OCI-LY7 (cell line): ENCODE measurements at regions of chr17 and their contacts with region 1.

Region 1: DNA sequence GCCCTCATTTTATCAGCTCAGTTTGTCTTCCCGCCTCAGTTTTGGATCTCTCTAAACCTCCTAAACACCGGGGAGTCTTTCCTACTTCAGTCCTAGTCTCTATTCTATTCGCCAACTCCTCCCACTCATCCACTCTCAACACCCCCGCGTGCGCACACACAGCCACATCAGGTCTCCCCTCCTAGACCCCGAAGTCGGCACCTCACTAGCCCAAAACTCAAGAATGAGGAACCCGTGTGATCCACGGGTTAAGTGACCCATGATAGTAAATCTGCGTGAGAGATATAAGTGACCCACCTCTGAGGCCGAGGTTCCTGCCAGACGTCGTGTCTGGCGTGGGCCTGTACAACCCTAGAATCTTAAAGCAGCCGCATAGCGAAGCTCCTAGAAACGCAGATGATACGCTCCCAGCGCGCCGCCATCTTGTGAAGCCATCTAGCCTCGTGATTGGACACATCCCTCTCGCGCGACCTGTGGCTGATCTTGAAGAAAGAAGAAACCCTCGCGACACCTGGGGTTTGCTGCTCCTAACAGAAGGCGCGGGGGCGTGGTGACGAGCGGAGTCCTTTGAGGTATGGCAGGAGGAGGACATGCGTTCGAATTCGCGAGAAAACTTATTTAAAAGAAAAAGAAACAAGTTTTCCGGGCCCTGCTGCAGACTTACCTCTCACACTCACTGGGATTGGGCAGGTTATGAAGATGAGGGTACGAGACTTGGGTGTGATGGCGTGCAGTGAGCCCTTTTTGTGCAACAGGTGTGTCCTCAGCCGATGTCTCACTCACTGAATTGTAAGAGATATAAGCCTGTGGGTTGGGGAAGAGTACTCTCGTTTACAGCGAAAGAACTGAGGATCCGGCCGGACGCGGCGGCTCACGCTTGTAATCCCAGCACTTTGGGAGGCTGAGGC is at the start of gene METTL16:
- DNase-seq: peak; percentile 100
- H3K4me3 ChIP-seq: peak within 1 kb of the TSS; percentile 79
- H3K27ac ChIP-seq: peak within 1 kb of the TSS; percentile 85
- H3K4me1 ChIP-seq: peaks cover 27% of the 10 kb centered on the region
- CTCF ChIP-seq: no peak
- total RNA-seq, gene METTL16: 24.4 and 26.6 TPM in 2 replicates

Region 2: DNA sequence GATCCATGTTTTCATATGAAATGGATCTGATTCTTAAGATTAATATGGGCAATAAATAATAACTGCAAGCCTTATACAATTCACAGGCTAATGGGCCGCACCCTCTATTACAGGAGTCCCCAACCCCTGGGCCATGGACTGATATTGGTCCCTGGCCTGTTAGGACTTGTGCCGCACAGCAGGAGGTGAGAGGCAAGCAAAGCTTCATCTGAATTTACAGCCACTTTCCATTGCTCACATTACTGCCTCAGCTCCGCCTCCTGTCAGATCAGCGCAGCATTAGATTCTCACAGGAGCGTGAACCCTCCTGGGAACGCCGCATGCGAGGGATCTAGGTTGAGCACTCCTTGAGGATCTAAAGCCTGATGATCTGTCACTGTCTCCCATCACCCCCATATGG is 26.8 kb before region 1 on chr17:
- CTCF ChIA-PET with region 1: interaction called, 5 read pairs
- POLR2A ChIA-PET with region 1: interaction called, 14 read pairs
- intact Hi-C with region 1: no loop called
- DNase-seq: no peak
- H3K4me3 ChIP-seq: no peak overlapping the region
- H3K27ac ChIP-seq: no peak overlapping the region
- H3K4me1 ChIP-seq: peaks cover 26% of the 10 kb centered on the region
- CTCF ChIP-seq: no peak

Region 3: DNA sequence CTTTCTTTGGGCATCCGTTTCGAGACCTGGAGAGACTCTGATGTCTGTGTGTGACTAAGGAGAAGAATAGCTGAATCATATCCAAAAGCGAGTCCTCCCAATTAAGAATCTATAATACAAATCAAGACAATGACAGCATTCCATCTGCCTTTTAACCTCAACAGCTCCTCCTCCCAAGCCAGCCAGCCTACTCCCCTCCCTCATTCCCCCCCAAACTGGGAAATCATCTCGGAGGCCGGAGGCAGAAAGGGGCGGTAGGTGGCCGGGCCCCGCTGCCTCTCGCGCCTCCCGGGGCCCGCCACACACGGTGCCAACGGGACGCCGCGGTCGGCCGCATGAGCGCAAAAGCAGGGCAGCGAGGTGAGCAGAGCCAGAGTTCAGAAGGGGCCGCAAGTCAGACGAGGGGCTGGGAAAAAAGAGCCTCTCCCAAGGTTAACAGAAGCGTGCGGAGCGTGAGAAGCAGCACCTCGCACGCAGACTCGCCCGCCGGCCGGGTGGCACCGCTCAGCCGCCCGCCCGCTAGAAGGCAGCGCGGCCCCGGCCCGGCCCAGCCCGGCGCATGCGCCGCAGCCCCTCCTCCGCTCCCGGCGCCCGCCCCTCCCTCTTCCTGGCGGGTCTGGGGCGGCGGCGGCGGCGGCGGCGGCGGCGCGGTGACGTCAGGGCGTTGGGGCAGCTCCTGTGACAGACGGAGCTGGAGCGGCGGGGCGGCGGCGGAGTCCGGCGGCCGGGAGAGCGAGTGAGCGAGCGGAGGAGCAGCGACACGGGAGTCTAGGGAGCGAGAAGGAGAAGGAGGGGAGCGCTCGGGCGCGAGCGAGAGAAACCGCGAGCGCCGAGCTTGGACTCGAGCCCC is 81.5 kb after region 1 on chr17 and contains the start of gene PAFAH1B1:
- CTCF ChIA-PET with region 1: no interaction called
- POLR2A ChIA-PET with region 1: no interaction called
- intact Hi-C with region 1: loop called (anchors 5 kb)
- DNase-seq: peak; percentile 91
- H3K4me3 ChIP-seq: peak within 1 kb of the TSS; percentile 91
- H3K27ac ChIP-seq: peak within 1 kb of the TSS; percentile 80
- H3K4me1 ChIP-seq: peaks cover 26% of the 10 kb centered on the region
- CTCF ChIP-seq: peak; percentile 39; the same call in 1 of the 2 replicates
- total RNA-seq, gene PAFAH1B1: 51.1 and 61.3 TPM in 2 replicates

Region 4: DNA sequence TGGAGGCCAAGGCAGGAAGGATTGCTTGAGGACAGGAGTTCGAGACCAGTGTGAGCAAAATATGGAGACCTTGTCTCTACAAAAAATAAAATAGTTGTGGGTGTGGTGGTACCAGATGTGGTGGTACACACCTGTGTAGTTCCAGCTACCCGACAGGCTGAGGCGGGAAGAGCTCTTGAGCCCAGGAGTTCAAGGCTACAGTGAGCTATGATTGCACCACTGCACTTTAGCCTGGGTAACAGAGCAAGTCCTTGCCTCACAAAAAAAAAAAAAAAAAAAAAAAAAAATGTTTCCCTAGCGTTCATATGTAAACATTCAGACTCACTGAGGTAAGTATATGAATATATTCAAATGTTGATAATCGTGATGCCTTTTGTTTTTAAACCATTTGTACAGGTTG is 160.3 kb after region 1 on chr17:
- CTCF ChIA-PET with region 1: no interaction called
- POLR2A ChIA-PET with region 1: no interaction called
- intact Hi-C with region 1: loop called (anchors 10 kb)
- DNase-seq: no peak
- H3K4me3 ChIP-seq: no peak overlapping the region
- H3K27ac ChIP-seq: no peak overlapping the region
- H3K4me1 ChIP-seq: no peaks in the 10 kb centered on the region
- CTCF ChIP-seq: no peak

Region 5: GRCh38 chr17:2711601-2712299 is 200.0 kb after region 1 on chr17 and contains the start of gene CLUH:
- CTCF ChIA-PET with region 1: no interaction called
- POLR2A ChIA-PET with region 1: no interaction called
- intact Hi-C with region 1: loop called (anchors 5 kb)
- DNase-seq: peak; percentile 94
- H3K4me3 ChIP-seq: peak within 1 kb of the TSS; percentile 100
- H3K27ac ChIP-seq: peak within 1 kb of the TSS; percentile 65
- H3K4me1 ChIP-seq: peaks cover 35% of the 10 kb centered on the region
- CTCF ChIP-seq: no peak
- total RNA-seq, gene CLUH: 85.2 and 96.3 TPM in 2 replicates